ENCODE measurements at regions of chr12 and their contacts with region 1.

Region 1: DNA sequence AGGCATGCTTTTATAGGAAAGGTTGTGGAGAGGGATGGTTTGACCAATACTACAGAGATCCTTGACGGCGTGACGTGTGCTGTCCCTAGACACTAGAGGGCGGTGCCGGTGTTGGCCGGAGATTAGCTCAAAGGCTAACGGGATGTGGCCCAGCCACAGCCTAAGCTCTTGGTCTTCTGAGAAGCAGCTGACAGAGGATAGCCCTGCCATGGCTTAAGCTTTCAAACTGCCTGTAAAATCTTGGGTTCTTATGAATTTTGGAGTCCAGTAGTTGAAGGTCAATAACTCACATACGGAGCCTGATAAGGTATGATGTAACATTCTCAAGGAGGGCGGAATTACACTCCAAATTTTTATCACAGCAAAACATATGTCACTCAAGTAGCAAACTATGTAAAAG is 515.7 kb upstream of the ATXN7L3B start:
- DNase-seq: peak; percentile 45 to 53
- H3K4me3 ChIP-seq: no peak overlapping the region
- H3K27ac ChIP-seq: no peak overlapping the region
- H3K4me1 ChIP-seq: no peaks in the 10 kb centered on the region
- H3K27me3 ChIP-seq: no peaks in the 10 kb centered on the region
- CTCF ChIP-seq: peak; percentile 73

Region 2: DNA sequence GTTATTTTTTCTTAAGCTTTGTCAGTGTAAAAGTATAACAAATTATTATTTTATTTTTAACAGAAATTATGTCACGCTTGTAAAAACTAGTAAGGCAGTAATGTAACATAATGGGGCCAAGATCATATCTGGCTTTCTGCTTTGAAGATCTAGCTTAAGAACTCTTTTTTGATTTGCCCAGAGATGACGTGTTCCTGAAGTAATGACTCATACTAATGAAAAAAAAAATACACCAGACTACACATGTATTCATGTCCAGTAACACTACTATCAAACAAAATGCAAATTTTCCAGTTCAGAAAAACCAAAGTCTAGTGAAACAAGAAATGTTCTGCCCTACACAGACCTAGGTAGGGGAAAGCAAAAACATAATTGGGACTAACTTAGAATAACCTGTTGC is 83.5 kb after region 1 on chr12:
- CTCF ChIA-PET with region 1: no interaction called
- POLR2A ChIA-PET with region 1: no interaction called
- intact Hi-C with region 1: loop called (anchors 5 kb)
- DNase-seq: no peak
- H3K4me3 ChIP-seq: no peak overlapping the region
- H3K27ac ChIP-seq: no peak overlapping the region
- H3K4me1 ChIP-seq: no peaks in the 10 kb centered on the region
- H3K27me3 ChIP-seq: no peaks in the 10 kb centered on the region
- CTCF ChIP-seq: no peak

Region 3: DNA sequence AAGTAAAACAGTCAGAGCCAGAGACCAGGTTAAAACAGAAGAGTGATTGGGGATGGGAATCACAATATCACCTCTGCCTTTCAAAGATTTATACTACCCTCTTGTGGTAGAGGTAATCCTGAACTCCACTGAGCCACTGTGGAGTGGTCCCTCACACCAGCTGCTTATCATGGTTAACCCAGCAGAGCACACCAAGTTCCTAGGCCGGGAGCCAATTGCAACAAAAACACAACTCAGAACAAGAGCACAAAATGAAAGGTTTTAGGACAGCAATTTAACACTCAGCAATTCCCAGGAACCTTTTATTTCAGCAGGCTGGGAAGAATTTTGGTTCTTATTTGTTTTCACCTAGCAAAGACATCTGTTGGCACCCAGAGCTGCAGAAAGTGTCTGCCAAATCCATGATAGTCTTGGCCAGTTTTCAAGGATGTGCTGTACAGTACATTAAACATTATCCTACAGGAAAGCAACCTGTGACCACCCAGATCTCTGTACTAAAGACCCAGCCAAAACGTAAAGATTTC is 295.2 kb after region 1 on chr12:
- CTCF ChIA-PET with region 1: interaction called, 7 read pairs
- POLR2A ChIA-PET with region 1: no interaction called
- intact Hi-C with region 1: loop called (anchors 1 kb)
- DNase-seq: peak in 1 of 2 experiments; percentile 15
- H3K4me3 ChIP-seq: no peak overlapping the region
- H3K27ac ChIP-seq: no peak overlapping the region
- H3K4me1 ChIP-seq: peaks cover 6% of the 10 kb centered on the region; the same call in 1 of the 2 replicates
- H3K27me3 ChIP-seq: no peaks in the 10 kb centered on the region
- CTCF ChIP-seq: peak; percentile 67

Region 4: GRCh38 chr12:74415633-74416032 is 393.7 kb after region 1 on chr12:
- CTCF ChIA-PET with region 1: no interaction called
- POLR2A ChIA-PET with region 1: no interaction called
- intact Hi-C with region 1: loop called (anchors 5 kb)
- DNase-seq: no peak
- H3K4me3 ChIP-seq: no peak overlapping the region
- H3K27ac ChIP-seq: no peak overlapping the region
- H3K4me1 ChIP-seq: no peaks in the 10 kb centered on the region
- H3K27me3 ChIP-seq: no peaks in the 10 kb centered on the region
- CTCF ChIP-seq: peak; percentile 62

Region 5: DNA sequence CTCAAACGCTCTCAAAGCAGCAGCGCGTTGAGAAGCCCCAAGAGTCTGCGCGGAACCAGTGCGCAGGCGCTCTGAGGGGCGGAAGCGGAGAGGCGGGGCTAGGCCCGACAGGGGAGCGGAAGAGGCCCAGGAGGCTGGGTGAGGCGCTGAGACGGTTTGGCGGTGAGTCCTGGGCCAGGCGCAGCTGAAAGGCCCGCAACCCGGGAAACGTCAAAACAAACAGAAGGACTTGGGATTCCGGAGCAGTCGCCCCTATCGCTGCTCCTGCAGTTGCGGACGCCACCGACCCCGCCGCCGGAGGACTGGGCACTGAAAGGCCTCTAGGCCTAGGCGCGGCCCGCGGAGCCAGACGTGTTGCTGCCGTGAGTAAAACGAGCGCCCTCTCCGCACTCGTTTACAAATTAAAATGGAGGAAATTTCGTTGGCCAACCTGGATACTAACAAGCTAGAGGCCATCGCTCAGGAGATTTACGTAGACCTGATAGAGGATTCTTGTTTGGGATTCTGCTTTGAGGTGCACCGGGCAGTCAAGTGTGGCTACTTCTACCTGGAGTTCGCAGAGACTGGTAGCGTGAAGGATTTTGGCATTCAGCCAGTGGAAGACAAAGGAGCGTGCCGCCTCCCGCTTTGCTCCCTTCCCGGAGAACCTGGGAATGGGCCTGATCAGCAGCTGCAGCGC is 515.9 kb after region 1 on chr12 and contains the start of gene ATXN7L3B:
- CTCF ChIA-PET with region 1: no interaction called
- POLR2A ChIA-PET with region 1: no interaction called
- intact Hi-C with region 1: loop called (anchors 10 kb)
- DNase-seq: peak; percentile 88 to 92
- H3K4me3 ChIP-seq: peak within 1 kb of the TSS; percentile 87
- H3K27ac ChIP-seq: peak within 1 kb of the TSS; percentile 80
- H3K4me1 ChIP-seq: peaks cover 23% of the 10 kb centered on the region
- H3K27me3 ChIP-seq: no peaks in the 10 kb centered on the region
- CTCF ChIP-seq: no peak
- total RNA-seq, gene ATXN7L3B: 25.3 and 31.6 TPM in 2 replicates